ENCODE measurements at regions of chr12 and their contacts with region 1.

Region 1: GRCh38 chr12:49707128-49707811 is at the start of gene FMNL3:
- DNase-seq: peak; percentile 98 to 100 (median 100)
- ATAC-seq: peak; percentile 96
- H3K4me3 ChIP-seq: peak within 1 kb of the TSS; percentile 73
- H3K27ac ChIP-seq: peak within 1 kb of the TSS; percentile 79
- H3K4me1 ChIP-seq: peaks cover 14 to 41% of the 10 kb centered on the region in 2 experiments
- H3K27me3 ChIP-seq: no peaks in the 10 kb centered on the region
- CTCF ChIP-seq: peak; percentile 93 to 98 (median 96)
- EP300 ChIP-seq: no peak
- POLR2A ChIP-seq: peak; percentile 41; the same call in 1 of the 2 replicates
- RAD21 ChIP-seq: peak; percentile 100
- polyA plus RNA-seq, gene FMNL3: 0.49 to 0.53 TPM

Region 2: DNA sequence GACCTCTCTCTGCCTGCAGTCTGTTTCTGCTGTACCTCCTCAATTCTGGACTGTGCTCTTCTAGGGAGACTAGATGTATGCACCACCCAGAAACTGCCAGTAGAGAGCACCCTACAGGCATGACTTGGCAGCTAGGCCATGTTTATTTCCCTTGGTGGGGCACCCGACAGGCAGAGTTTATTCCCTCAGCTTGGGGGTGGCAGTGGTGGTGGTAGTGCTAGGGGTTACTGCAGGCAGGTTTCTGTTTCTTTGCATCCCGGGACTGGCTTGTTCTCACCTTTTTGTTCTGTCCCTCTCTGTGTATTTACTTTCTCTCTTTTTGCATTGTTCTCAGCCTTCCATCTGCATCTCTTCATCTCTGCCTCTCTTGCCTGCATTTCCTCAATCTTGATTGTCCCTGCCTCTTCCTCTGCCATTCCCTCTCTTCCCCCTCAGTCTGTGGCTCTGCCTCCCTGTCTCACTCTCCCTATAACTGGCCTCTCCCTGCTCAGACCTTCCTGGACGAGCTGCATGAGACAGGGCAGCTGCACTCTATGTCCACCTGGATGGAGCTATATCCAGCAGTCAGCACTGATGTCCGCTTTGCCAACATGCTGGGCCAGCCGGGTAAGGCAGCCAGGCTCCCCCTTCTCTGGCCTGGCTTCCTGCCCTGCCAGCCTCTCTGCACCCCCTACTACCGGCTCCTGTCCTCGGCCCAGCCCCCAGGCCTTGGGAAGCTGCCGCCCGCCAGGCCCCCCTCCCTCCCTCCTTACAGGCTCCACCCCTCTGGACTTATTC is 70.1 kb before region 1 on chr12:
- CTCF ChIA-PET with region 1: interaction called, 6 read pairs
- POLR2A ChIA-PET with region 1: interaction called, 4 read pairs
- in situ Hi-C with region 1: loop called (anchors 5 kb)
- intact Hi-C with region 1: loop called (anchors 2 kb)
- DNase-seq: peak; percentile 70 to 74 (median 72)
- ATAC-seq: peak; percentile 95
- H3K4me3 ChIP-seq: no peak overlapping the region
- H3K27ac ChIP-seq: no peak overlapping the region
- H3K4me1 ChIP-seq: peaks cover 3 to 12% of the 10 kb centered on the region in 2 experiments; a peak in 3 of 5 replicates
- H3K27me3 ChIP-seq: no peaks in the 10 kb centered on the region
- CTCF ChIP-seq: peak; percentile 81 to 82 (median 82)
- EP300 ChIP-seq: no peak
- POLR2A ChIP-seq: no peak
- RAD21 ChIP-seq: peak; percentile 50 to 84

Region 3: GRCh38 chr12:49673446-49674317 is 33.6 kb before region 1 on chr12:
- CTCF ChIA-PET with region 1: interaction called, 8 read pairs
- POLR2A ChIA-PET with region 1: interaction called, 9 read pairs
- in situ Hi-C with region 1: no loop called
- intact Hi-C with region 1: loop called (anchors 5 kb)
- DNase-seq: peak; percentile 84 to 90 (median 88)
- ATAC-seq: peak; percentile 99
- H3K4me3 ChIP-seq: no peak overlapping the region
- H3K27ac ChIP-seq: peak overlapping the region; percentile 61
- H3K4me1 ChIP-seq: peaks cover 20 to 40% of the 10 kb centered on the region in 2 experiments
- H3K27me3 ChIP-seq: no peaks in the 10 kb centered on the region
- CTCF ChIP-seq: peak; percentile 28 to 46 (median 35); a peak in 3 of 6 replicates
- EP300 ChIP-seq: peak; percentile 32; the same call in 1 of the 2 replicates
- POLR2A ChIP-seq: peak; percentile 55; the same call in 1 of the 2 replicates
- RAD21 ChIP-seq: no peak

Region 4: DNA sequence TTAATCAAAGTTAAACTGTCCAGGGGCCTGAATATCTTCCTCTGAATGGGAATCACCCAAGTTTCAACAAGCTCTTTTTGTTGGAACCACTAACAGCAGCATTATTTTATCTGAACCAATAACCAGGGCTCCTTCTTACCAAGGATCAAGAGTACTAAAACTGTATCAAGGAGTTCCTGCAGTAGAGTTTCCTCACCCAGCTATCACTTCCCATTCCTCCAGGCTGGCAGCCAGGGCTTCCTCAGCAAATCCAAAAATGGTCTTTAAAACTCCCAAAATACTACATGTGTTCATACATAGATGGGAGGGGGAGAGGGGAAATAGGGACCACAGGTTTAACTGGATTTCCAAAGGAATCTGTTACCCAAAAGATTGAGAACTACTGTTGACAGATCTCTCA is 10.5 kb before region 1 on chr12:
- CTCF ChIA-PET with region 1: interaction called, 5 read pairs
- POLR2A ChIA-PET with region 1: interaction called, 26 read pairs
- in situ Hi-C with region 1: no loop called
- intact Hi-C with region 1: no loop called
- DNase-seq: no peak
- ATAC-seq: no peak
- H3K4me3 ChIP-seq: no peak overlapping the region
- H3K27ac ChIP-seq: no peak overlapping the region
- H3K4me1 ChIP-seq: peaks cover 0 to 22% of the 10 kb centered on the region in 2 experiments; a peak in 4 of 5 replicates
- H3K27me3 ChIP-seq: no peaks in the 10 kb centered on the region
- CTCF ChIP-seq: no peak
- EP300 ChIP-seq: no peak
- POLR2A ChIP-seq: no peak
- RAD21 ChIP-seq: no peak

Region 5: DNA sequence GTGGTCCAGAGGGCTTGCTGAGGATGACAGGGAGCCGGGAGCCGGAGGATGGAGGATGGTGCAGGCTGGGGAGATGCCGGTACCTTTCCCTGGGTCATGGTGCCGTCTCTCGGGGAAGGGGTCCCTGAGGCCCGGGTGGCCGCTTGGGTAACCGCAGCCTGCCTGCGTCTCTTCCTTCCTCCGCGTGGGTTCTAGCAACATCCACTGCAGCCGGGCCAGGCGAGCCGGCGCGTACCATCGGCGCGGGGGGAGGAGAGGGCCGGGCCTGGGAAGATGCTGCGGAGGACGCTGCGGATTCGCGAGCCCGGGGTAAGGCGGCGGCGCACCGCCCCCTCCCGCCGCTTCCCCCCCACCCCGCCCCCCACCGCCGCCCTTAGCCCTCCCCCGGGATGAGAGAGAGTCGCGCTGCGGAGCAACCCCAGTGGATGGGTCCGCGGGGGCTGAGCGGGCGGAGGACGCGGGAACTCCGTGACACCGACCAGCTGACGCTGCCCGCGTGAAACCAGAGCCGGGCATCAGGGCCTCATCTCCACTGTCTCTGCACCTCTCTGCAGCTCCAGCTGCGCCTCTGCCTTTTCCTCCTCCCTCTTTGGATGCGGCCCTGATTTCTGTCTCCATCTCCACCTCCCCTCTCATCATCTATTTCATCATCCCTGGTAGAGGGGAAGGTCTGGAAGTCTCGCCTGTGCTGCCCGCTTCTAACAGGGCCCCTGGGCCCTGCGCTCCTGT is 196.6 kb after region 1 on chr12 and contains the start of gene FAIM2:
- CTCF ChIA-PET with region 1: no interaction called
- POLR2A ChIA-PET with region 1: no interaction called
- in situ Hi-C with region 1: no loop called
- intact Hi-C with region 1: no loop called
- DNase-seq: peak in 2 of 4 experiments; percentile 72 to 73
- ATAC-seq: no peak
- H3K4me3 ChIP-seq: no peak within 1 kb of the TSS
- H3K27ac ChIP-seq: no peak within 1 kb of the TSS
- H3K4me1 ChIP-seq: peaks cover 19 to 26% of the 10 kb centered on the region in 2 experiments
- H3K27me3 ChIP-seq: peaks cover 4 to 17% of the 10 kb centered on the region in 2 experiments; a peak in 3 of 5 replicates
- CTCF ChIP-seq: no peak
- EP300 ChIP-seq: no peak
- POLR2A ChIP-seq: no peak
- RAD21 ChIP-seq: no peak
- polyA plus RNA-seq, gene FAIM2: 0.10 TPM in 1 of 2 experiments, not detected in the other

Measured in K562 (cell line).